ENCODE measurements at regions of chr12 and their contacts with region 1.

Region 1: DNA sequence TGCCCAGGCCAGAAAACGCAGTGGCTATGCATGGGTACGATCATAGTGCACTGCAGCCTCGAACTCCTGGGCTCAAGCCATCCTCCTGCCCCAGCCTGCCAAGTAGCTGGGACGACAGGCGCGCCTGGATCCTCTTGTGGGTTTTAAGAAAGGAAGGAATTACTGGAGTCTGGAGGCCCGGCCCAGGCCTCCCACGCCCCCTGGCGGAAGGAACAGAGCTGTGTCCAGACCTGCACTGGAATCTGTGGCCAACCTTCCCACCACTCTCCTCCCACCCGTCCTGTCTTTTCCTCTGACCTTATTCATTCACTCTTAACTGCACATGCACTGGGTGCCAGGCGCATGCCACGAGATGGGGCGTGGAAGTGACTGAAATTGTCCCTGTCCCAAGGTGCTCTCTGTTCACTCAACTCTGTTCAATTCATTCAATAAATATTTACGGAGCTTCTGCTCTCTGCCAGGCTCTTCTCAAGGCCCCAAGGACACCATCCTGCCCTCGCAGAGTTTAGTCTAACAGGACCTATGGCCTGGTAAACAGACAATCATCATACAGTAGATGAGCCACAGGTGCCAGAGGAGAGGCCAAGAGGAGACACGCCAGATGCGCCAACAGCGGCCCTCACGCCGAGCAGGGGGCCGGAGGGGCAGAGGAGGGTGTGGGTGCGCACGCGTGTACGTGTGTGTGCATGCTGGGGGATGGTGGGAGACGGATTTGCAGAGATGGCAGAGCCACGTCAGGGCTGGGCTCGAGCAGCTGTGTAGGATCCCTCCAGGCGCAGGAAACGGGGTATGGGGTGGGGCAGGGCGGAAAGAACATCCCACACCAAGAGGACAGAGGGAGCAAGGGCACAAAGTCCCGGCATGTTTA is 13.7 kb upstream of the TMEM106C start:
- DNase-seq: peak in 1 of 2 donors; percentile 83
- H3K4me3 ChIP-seq: no peak overlapping the region
- H3K27ac ChIP-seq: no peak overlapping the region
- H3K4me1 ChIP-seq: no peaks in the 10 kb centered on the region
- H3K27me3 ChIP-seq: no peaks in the 10 kb centered on the region
- CTCF ChIP-seq: peak; percentile 69 to 80 (median 71)

Region 2: DNA sequence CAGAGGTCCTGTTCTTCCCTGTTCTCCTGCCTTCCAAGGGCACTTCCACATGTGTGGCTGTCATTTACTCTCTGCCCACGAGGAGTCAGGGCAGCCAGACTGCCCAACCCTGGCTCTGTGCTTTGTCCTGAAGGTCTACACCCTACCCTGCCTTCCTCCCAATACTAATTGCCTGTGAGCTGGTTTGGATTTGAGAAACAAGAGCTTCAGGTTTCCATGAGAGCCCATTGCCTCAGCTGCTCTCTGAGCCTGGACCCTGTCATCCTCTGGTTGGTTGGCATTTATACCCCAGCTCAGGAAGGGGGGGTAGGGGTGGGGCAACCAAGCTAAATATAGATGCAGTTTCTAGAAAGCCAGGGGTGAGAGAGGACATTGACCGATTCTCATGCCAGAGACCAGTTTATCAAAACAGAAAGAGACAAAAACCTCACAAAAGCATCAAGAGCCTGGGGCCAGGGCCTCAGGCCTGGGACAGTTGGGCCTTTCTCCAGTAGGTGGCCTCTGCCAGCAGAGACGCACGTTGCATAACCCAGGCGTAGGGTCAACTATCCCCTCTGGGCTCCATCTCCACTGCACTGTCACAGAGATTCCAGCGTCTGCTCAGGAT is 79.4 kb before region 1 on chr12:
- intact Hi-C with region 1: loop called (anchors 5 kb)
- DNase-seq: peak in 1 of 2 donors; percentile 69
- H3K4me3 ChIP-seq: no peak overlapping the region
- H3K27ac ChIP-seq: peak overlapping the region in 1 of 2 donors; percentile 34
- H3K4me1 ChIP-seq: peaks cover 10 to 11% of the 10 kb centered on the region in 2 donors
- H3K27me3 ChIP-seq: no peaks in the 10 kb centered on the region
- CTCF ChIP-seq: peak in 2 of 3 experiments; percentile 26 to 41

Region 3: DNA sequence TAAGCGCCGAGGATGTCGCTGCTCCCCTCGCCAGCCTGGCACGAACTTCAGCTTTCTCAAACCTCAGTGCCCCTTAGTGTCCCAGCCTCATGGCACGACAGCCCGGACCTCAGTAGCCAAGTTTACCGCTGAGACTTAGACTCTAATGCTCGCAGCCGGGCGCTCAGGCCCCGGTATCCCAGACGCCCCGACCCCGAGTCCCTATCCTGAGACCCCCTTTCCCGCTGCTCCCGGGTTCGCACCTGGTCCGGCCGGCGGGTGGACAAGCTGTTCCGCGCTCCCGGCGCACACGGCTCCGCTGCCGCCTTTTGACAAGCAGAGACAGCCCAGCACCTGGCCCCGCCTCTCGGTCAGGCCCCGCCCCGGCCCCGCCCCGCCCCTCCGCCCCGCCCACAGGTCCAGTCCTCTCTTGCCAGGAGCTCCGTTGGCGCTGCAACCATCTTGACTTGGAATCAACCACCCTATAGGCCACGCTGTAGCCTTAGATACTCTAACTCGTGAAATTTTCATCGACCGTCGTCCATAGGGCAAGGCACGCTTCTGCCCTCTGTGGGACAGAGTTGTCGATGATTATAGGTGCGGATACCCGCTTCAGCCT is 44.9 kb before region 1 on chr12 and contains the start of gene VDR:
- intact Hi-C with region 1: no loop called
- DNase-seq: peak; percentile 59 to 89
- H3K4me3 ChIP-seq: peak within 1 kb of the TSS; percentile 61 to 78
- H3K27ac ChIP-seq: peak within 1 kb of the TSS; percentile 47 to 65
- H3K4me1 ChIP-seq: peaks cover 0 to 21% of the 10 kb centered on the region in 2 donors
- H3K27me3 ChIP-seq: no peaks in the 10 kb centered on the region
- CTCF ChIP-seq: peak in 1 of 3 experiments; percentile 10
- total RNA-seq, gene VDR: 13.1 TPM

Region 4: GRCh38 chr12:48216785-48217184 is 267.1 kb after region 1 on chr12:
- intact Hi-C with region 1: no loop called
- DNase-seq: no peak
- H3K4me3 ChIP-seq: no peak overlapping the region
- H3K27ac ChIP-seq: no peak overlapping the region
- H3K4me1 ChIP-seq: no peaks in the 10 kb centered on the region
- H3K27me3 ChIP-seq: no peaks in the 10 kb centered on the region
- CTCF ChIP-seq: no peak

Measured in ascending aorta (tissue), 2 donors.